Psoas muscle (tissue), 8 donors: ENCODE measurements at regions of chr17 and their contacts with region 1.

Region 1: GRCh38 chr17:57597531-57598453 is 147.3 kb downstream of the CCDC182 start:
- DNase-seq: peak; percentile 64 to 66
- ATAC-seq: peak; percentile 74 to 83 (median 76)
- H3K4me3 ChIP-seq: no peak overlapping the region
- H3K27ac ChIP-seq: peak overlapping the region; percentile 1
- H3K4me1 ChIP-seq: peaks cover 14% of the 10 kb centered on the region
- H3K27me3 ChIP-seq: no peaks in the 10 kb centered on the region
- CTCF ChIP-seq: peak; percentile 78

Region 2: GRCh38 chr17:57671667-57672632 is 74.2 kb after region 1 on chr17:
- intact Hi-C with region 1: loop called (anchors 2 to 5 kb)
- DNase-seq: peak; percentile 70 to 82
- ATAC-seq: peak; percentile 82 to 92 (median 88)
- H3K4me3 ChIP-seq: no peak overlapping the region
- H3K27ac ChIP-seq: no peak overlapping the region
- H3K4me1 ChIP-seq: no peaks in the 10 kb centered on the region
- H3K27me3 ChIP-seq: no peaks in the 10 kb centered on the region
- CTCF ChIP-seq: peak; percentile 88

Region 3: DNA sequence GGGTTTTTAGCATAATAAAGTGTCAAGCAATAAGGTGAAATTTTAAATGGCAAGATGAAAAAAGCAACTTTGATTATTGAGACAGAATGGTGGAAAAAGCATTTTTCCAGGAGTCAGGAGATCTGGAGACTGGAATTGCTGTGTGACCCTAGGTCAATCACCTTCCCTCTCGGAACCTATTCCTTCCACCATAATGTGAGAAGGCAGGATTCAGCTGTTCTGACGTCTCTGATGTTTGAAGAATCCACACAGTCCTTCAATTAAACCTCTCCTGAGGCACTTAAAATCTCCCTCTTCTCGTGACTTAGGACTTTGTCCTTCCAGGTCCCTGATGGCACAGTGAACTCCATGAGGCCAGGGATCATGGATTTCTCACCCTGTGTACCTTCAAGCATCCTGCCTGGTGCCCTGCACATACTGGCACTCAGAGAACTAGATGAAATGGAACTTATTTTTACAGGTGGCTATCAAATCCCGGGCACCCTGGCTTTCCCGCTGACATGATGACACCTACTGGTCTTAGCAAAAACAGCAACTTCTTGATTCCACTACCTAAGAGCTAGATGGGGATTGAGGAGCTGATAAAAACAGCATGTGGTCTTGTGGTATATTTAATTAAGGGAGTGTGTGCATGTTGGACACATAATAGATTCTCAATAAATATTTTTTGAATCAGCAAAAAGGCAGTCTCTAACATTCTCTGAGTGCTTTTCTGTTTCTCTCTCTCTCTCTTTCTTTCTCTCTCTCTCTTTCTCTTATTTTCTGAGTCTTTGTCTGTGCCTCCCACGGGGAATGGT is 149.6 kb after region 1 on chr17:
- intact Hi-C with region 1: loop called in 1 of 2 experiments (anchors 2 kb)
- DNase-seq: no peak
- ATAC-seq: peak; percentile 73 to 92 (median 82)
- H3K4me3 ChIP-seq: no peak overlapping the region
- H3K27ac ChIP-seq: no peak overlapping the region
- H3K4me1 ChIP-seq: no peaks in the 10 kb centered on the region
- H3K27me3 ChIP-seq: no peaks in the 10 kb centered on the region
- CTCF ChIP-seq: peak; percentile 77

Region 4: DNA sequence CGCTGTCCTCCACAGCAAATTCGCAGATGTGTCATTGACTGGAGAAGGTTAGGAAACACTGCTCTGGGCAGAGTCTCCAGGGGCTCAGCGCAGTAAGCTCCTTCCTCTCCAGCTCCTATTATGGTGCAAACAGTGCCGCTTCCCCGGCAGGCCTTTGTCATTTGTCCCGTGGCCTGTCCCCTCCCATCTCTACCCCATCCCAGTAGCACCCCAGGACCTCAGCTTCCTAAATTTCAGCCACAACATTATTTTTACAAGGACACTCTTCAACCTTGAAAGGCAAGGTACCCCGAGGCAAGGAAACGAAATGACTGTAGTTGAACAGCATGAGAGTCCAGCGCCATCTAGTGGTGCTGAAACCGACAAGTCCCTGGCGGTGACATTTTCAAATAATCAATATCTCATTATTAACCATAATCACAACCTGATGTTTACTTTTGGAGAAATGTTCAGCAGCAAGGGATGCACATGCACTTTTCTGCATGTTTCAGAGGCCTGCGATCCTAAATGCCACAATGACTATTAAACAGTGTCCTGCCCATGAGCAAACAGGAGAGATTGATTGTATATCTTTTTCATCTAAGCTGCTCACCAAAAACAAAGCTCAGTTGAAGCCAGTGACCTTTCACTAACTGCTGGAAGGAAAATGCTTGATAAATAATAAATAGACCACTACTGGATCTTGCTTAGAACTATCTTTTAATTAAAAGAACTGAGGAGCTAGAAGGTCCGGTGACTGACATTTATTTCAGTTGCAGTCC is 235.6 kb after region 1 on chr17:
- intact Hi-C with region 1: loop called (anchors 10 kb)
- DNase-seq: peak; percentile 67 to 82
- ATAC-seq: peak; percentile 68 to 83 (median 81)
- H3K4me3 ChIP-seq: peak overlapping the region; percentile 60
- H3K27ac ChIP-seq: peak overlapping the region; percentile 68
- H3K4me1 ChIP-seq: peaks cover 38% of the 10 kb centered on the region
- H3K27me3 ChIP-seq: no peaks in the 10 kb centered on the region
- CTCF ChIP-seq: peak; percentile 93